ENCODE measurements at regions of chr6 and their contacts with region 1.

Region 1: DNA sequence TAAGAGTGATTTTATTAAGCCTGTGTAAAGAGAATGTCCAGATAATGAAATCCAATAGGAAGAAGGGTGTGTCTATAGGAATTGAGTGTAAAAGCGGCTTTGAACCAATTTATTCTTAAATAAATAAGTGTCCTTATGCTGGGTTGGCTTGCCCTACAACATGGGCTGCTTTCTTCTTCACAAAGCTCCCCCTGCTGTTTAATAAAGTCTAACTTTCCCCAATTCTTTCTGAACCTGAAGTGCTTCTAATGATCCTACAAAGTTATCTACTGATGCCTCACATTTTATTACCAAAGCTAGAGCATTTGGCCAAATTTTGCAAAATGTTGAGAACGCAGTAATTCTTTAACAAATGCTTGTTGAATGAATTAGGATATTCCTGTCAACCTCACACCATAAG is 36.3 kb upstream of the SIRT5 start:
- DNase-seq: no peak
- H3K4me3 Mint-ChIP-seq: no peak overlapping the region
- H3K27ac Mint-ChIP-seq: no peak overlapping the region
- H3K4me1 Mint-ChIP-seq: peaks cover 3% of the 10 kb centered on the region
- H3K27me3 Mint-ChIP-seq: peaks cover 4% of the 10 kb centered on the region

Region 2: DNA sequence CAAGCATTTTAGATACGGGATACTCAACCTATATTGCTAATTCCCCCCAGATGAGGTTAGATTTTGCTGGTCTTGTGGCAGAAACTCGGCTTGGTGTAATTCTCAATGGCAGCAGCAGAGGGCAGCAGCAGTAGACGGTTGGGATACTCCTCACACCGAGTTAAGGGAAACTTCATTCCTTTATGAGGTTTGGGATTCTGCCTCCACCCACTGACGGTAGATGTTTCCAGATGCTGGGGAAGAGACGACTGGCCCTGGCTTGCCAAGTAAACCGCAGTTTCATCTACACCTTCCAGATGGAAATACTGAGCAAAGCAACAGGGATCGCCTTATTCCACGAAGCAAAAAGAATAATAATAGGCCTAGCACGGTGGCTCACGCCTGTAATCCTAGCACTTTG is 201.5 kb before region 1 on chr6:
- intact Hi-C with region 1: loop called (anchors 5 kb)
- DNase-seq: peak; percentile 63
- H3K4me3 Mint-ChIP-seq: no peak overlapping the region
- H3K27ac Mint-ChIP-seq: no peak overlapping the region
- H3K4me1 Mint-ChIP-seq: peaks cover 31% of the 10 kb centered on the region
- H3K27me3 Mint-ChIP-seq: peaks cover 1% of the 10 kb centered on the region

Region 3: GRCh38 chr6:13604546-13605416 is 66.7 kb after region 1 on chr6:
- intact Hi-C with region 1: no loop called
- DNase-seq: no peak
- H3K4me3 Mint-ChIP-seq: no peak overlapping the region
- H3K27ac Mint-ChIP-seq: no peak overlapping the region
- H3K4me1 Mint-ChIP-seq: peaks cover 13% of the 10 kb centered on the region
- H3K27me3 Mint-ChIP-seq: no peaks in the 10 kb centered on the region

Measured in activated T-helper 2 cell treated with anti-CD3 and anti-CD28 coated beads, Interferon-gamma antibody, Interleukin-2, Interleukin-4, amounts not matched to agents 10 μg/mL and 5 μg/mL and 100 μg/mL, durations not matched to agents 14 hours and 24 hours and 36 hours (primary cell).